ENCODE measurements at regions of chr6 and their contacts with region 1.

Region 1: DNA sequence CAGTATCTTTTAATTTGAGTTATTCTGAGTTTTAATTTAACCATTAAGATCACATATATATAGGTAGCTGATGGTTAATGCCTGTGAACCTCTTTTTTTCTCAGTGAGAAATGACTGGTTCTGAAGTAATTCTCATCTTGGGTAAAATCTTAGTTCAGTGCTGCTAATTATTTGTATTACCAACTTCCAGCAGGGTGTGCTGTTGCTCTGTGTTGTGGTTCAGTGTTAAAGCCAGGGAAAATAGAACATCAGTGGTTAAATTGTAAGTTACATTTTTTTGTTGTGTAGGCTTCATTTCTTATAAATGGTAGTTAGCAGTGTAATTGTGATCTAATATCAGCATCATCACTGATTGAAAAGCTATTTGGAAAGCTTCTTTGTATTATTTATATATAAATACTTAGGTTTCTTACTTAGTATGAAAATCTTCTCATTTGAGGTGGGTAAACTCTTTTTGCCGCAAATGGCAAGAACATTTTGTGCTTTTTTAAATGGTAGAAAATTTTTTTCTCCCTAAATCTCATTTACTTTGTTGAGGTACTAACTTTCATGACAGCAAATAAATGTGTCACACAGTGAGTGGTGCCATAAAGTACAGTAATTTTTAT is 43.7 kb downstream of the CDC5L start:
- DNase-seq: peak; percentile 19 to 46
- ATAC-seq: peak; percentile 59 to 84; a peak in 5 of 6 replicates
- H3K4me3 ChIP-seq: no peak overlapping the region
- H3K27ac ChIP-seq: no peak overlapping the region
- H3K4me1 ChIP-seq: 0 out of 3 replicates have a peak, but pooled peaks cover 3% of the 10 kb centered on the region
- CTCF ChIP-seq: peak; percentile 66
- EP300 ChIP-seq: no peak
- POLR2A ChIP-seq: no peak
- RAD21 ChIP-seq: peak; percentile 64 to 66

Region 2: DNA sequence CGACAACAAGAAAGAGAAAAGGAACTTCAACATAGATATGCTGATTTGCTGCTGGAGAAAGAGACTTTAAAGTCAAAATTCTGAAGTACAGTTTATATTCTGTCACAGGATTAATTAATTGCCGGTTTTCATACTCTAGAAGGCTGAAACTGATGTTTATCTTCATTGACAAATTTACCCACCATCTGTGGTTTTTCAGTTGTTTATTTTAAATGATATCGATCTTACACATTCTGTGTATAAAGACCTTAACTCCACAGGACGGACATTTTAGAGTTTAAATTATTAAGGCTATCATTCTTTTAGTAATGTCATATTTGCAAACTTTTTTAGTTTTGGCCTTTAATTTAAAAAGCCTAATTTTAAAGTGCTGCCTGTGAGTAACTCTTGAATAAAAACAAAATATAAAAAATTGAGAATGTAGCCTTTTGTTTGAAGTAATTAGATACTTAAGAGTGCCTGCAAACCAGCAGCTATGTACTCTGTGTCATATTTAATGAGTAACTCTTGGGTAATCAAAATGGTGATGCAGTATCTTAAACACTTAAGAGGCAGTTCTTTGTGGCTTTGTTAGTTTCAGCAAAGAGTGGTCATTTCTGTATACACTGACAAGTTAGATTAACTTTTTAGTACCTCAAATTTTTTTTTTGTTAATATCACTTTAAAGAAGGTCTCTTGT is 15.5 kb after region 1 on chr6:
- CTCF ChIA-PET with region 1: interaction called, 13 read pairs
- POLR2A ChIA-PET with region 1: no interaction called
- DNase-seq: no peak
- ATAC-seq: no peak
- H3K4me3 ChIP-seq: no peak overlapping the region
- H3K27ac ChIP-seq: no peak overlapping the region; a peak in 1 of 6 replicates
- H3K4me1 ChIP-seq: peaks cover 20% of the 10 kb centered on the region
- CTCF ChIP-seq: no peak
- EP300 ChIP-seq: no peak
- POLR2A ChIP-seq: no peak
- RAD21 ChIP-seq: no peak

Region 3: DNA sequence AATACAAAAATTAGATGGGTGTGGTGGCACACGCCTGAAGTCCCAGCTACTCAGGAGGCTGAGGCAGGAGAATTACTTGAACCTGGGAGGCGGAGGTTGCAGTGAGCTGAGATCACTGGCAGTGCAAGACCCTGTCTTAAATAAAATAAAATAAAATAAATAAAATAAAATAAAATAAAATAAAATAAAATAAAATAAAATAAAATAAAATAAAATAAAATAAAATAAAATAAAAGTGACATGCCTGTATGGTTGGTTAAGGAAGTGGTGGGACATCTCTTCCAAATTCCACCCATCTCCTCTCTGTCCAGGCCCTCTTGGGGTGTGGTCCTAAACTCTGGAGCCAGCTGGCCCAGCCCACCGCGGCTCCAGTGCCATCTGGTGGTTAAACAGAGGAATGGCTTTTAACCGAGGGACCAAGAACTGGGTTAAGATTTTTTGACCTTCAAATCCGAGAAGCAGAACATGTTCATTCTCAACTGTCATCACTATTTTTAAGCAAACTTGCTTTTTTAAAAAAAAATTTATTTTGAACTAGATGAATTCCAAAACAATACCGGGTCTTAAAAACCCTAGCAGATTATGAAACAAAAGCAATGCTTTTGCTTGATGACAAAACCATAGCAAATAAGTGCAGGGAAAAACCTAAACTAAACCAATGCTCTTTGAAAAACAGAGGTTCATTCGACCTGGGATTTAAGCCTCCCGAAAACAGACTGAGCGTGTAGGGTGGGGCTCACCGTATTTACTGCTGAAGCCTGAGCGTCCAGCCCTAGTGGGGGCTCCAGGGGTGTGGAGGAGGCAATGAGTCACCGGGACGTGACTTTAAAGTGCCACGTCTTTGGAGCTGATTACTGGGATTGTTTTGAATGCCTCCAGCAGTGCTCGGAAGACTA is 25.1 kb after region 1 on chr6:
- CTCF ChIA-PET with region 1: interaction called, 56 read pairs
- POLR2A ChIA-PET with region 1: no interaction called
- DNase-seq: peak; percentile 43 to 48
- ATAC-seq: peak; percentile 62 to 83; a peak in 4 of 6 replicates
- H3K4me3 ChIP-seq: no peak overlapping the region
- H3K27ac ChIP-seq: no peak overlapping the region
- H3K4me1 ChIP-seq: peaks cover 16% of the 10 kb centered on the region; the same call in 2 of the 3 replicates
- CTCF ChIP-seq: peak; percentile 68
- EP300 ChIP-seq: no peak
- POLR2A ChIP-seq: no peak
- RAD21 ChIP-seq: peak; percentile 61 to 68

Region 4: DNA sequence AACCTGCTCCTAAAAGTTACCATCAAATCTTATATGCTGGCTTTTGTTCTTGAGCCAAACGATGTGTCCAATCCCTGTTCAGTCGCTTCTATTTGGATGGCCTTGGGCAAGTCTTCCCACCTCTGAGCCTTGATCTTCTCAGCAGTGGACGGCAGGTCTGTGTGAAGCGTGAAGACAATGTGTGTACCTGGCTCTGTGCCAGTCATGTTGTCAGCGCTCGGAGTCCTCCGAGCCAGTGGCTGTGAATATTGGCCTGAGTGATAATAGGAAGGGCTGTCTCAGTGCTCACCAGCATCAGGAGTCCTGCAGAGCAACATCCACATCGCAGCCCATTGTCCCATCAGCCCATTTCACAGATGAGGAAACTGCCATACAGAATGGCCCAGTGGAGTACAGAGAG is 175.3 kb after region 1 on chr6:
- CTCF ChIA-PET with region 1: no interaction called
- POLR2A ChIA-PET with region 1: no interaction called
- DNase-seq: no peak
- ATAC-seq: no peak
- H3K4me3 ChIP-seq: no peak overlapping the region
- H3K27ac ChIP-seq: no peak overlapping the region
- H3K4me1 ChIP-seq: no peaks in the 10 kb centered on the region
- CTCF ChIP-seq: no peak
- EP300 ChIP-seq: no peak
- POLR2A ChIP-seq: no peak
- RAD21 ChIP-seq: no peak

Measured in A549 (cell line).